ENCODE measurements at regions of chr10 and their contacts with region 1.

Region 1: GRCh38 chr10:24724381-24725228 is 918 bp upstream of the ARHGAP21 start:
- H3K4me3 Mint-ChIP-seq: peak overlapping the region; percentile 93
- H3K27ac Mint-ChIP-seq: peak overlapping the region; percentile 97
- H3K4me1 Mint-ChIP-seq: peaks cover 30% of the 10 kb centered on the region
- H3K27me3 Mint-ChIP-seq: peaks cover 8% of the 10 kb centered on the region

Region 2: DNA sequence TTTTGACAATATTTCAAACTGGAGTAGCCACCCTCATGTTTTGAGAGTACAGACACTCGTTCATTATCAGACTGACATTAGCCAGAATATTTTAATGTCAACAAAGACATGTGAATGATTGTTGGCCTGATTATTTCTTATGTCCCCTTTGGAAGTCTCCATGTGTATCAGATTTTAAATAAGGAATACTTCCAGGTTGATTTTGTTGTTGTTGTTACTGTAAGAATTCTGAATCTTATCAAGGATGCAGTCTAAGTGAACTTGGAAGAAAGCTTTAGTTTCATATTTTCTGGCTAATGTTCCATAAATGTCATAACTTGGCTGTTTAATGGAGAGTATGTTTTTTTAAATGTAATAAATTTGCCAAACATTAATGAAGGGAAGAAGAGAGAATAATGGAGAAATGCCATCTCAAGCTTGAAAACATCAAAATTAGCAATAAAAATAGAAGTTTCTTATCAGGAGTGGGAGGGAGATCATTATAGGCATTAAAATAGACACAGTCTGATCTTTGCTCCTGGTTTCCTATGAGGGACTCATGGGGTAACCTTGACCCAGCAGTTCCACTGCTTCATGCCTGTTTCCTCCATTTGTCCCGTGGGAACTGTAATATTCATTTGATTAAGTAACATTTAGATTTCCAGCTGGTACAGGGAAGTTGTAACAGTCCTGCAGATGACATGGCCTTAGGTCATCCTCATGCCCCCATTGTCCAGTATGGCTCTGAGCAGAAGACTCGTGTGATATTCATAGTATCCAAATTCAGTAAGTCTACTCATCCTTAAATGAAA is 638.1 kb before region 1 on chr10:
- intact Hi-C with region 1: no loop called
- H3K4me3 Mint-ChIP-seq: no peak overlapping the region
- H3K27ac Mint-ChIP-seq: no peak overlapping the region
- H3K4me1 Mint-ChIP-seq: no peaks in the 10 kb centered on the region
- H3K27me3 Mint-ChIP-seq: no peaks in the 10 kb centered on the region

Region 3: GRCh38 chr10:24513155-24513554 is 211.4 kb before region 1 on chr10:
- intact Hi-C with region 1: no loop called
- H3K4me3 Mint-ChIP-seq: no peak overlapping the region
- H3K27ac Mint-ChIP-seq: no peak overlapping the region
- H3K4me1 Mint-ChIP-seq: no peaks in the 10 kb centered on the region
- H3K27me3 Mint-ChIP-seq: no peaks in the 10 kb centered on the region

Region 4: GRCh38 chr10:24873281-24873683 is 148.7 kb after region 1 on chr10:
- intact Hi-C with region 1: loop called (anchors 10 kb)
- H3K4me3 Mint-ChIP-seq: no peak overlapping the region
- H3K27ac Mint-ChIP-seq: peak overlapping the region; percentile 75
- H3K4me1 Mint-ChIP-seq: peaks cover 30% of the 10 kb centered on the region
- H3K27me3 Mint-ChIP-seq: peaks cover 4% of the 10 kb centered on the region

Region 5: GRCh38 chr10:24920907-24921881 is 196.6 kb after region 1 on chr10:
- intact Hi-C with region 1: loop called (anchors 5 kb)
- H3K4me3 Mint-ChIP-seq: peak overlapping the region; percentile 23
- H3K27ac Mint-ChIP-seq: peak overlapping the region; percentile 81
- H3K4me1 Mint-ChIP-seq: peaks cover 26% of the 10 kb centered on the region
- H3K27me3 Mint-ChIP-seq: no peaks in the 10 kb centered on the region

Region 6: GRCh38 chr10:25016376-25017154 is 292.0 kb after region 1 on chr10 and contains the start of gene THNSL1:
- intact Hi-C with region 1: loop called (anchors 1 kb)
- H3K4me3 Mint-ChIP-seq: peak within 1 kb of the TSS; percentile 81
- H3K27ac Mint-ChIP-seq: peak within 1 kb of the TSS; percentile 97
- H3K4me1 Mint-ChIP-seq: peaks cover 21% of the 10 kb centered on the region
- H3K27me3 Mint-ChIP-seq: no peaks in the 10 kb centered on the region